Left ventricle myocardium inferior (tissue), 1 donor: ENCODE measurements at regions of chr2 and their contacts with region 1.

Region 1: GRCh38 chr2:228657807-228658402 is 476.4 kb upstream of the SPHKAP start:
- DNase-seq: no peak
- H3K4me3 ChIP-seq: no peak overlapping the region
- H3K27ac ChIP-seq: no peak overlapping the region
- H3K4me1 ChIP-seq: peaks cover 22% of the 10 kb centered on the region
- H3K27me3 ChIP-seq: no peaks in the 10 kb centered on the region
- CTCF ChIP-seq: peak; percentile 61

Region 2: DNA sequence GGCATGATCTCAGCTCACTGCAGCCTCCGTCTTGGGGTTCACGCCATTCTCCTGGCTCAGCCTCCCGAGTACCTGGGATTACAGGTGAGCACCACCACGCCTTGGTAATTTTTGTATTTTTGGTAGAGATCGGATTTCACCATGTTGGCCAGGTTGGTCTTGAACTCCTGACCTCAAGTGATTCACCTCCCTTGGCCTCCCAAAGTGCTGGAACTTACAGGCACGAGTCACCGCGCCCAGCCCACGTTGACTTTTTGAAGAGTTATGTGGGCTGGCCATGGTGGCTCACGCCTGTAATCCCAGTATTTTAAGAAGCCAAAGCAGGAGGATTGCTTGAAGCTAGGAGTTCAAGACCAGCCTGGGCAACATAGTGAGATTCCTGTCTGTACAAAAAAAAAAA is 823.5 kb before region 1 on chr2:
- intact Hi-C with region 1: no loop called
- DNase-seq: no peak
- H3K4me3 ChIP-seq: no peak overlapping the region
- H3K27ac ChIP-seq: no peak overlapping the region
- H3K4me1 ChIP-seq: no peaks in the 10 kb centered on the region
- H3K27me3 ChIP-seq: no peaks in the 10 kb centered on the region
- CTCF ChIP-seq: no peak

Region 3: GRCh38 chr2:228039752-228040534 is 618.0 kb before region 1 on chr2:
- intact Hi-C with region 1: loop called (anchors 5 kb)
- DNase-seq: no peak
- H3K4me3 ChIP-seq: no peak overlapping the region
- H3K27ac ChIP-seq: no peak overlapping the region
- H3K4me1 ChIP-seq: no peaks in the 10 kb centered on the region
- H3K27me3 ChIP-seq: no peaks in the 10 kb centered on the region
- CTCF ChIP-seq: peak; percentile 64